AG04450 (cell line): ENCODE measurements at regions of chr14 and their contacts with region 1.

Region 1: GRCh38 chr14:94601884-94602391 is 10.3 kb upstream of the SERPINA3 start:
- DNase-seq: peak; percentile 78
- H3K4me3 ChIP-seq: no peak overlapping the region
- H3K27ac ChIP-seq: peak overlapping the region; percentile 94
- H3K27me3 ChIP-seq: no peaks in the 10 kb centered on the region
- CTCF ChIP-seq: no peak

Region 2: DNA sequence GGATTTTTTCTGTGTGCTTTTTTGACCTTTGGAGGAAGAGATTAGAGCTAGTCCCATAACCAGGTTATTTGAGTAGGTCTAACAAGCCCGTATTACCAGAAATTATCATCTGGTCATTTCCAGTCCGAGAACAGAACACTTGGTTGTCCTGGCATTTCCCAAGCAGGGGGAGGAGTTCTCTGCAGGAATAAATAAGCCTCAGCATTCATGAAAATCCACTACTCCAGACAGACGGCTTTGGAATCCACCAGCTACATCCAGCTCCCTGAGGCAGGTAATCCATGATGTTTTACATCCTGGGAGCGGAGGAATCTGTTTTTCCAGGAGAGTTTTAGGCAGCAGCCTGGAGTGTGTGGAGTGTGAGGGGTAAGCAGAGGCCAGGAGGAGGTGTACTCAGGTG is 10.2 kb after region 1 on chr14 and contains the start of gene SERPINA3:
- CTCF ChIA-PET with region 1: interaction called, 4 read pairs
- POLR2A ChIA-PET with region 1: interaction called, 16 read pairs
- DNase-seq: no peak
- H3K4me3 ChIP-seq: no peak within 1 kb of the TSS
- H3K27ac ChIP-seq: peak within 1 kb of the TSS; percentile 57
- H3K27me3 ChIP-seq: no peaks in the 10 kb centered on the region
- CTCF ChIP-seq: no peak
- polyA plus RNA-seq, gene SERPINA3: 1.8 and 2.4 TPM in 2 replicates

Region 3: DNA sequence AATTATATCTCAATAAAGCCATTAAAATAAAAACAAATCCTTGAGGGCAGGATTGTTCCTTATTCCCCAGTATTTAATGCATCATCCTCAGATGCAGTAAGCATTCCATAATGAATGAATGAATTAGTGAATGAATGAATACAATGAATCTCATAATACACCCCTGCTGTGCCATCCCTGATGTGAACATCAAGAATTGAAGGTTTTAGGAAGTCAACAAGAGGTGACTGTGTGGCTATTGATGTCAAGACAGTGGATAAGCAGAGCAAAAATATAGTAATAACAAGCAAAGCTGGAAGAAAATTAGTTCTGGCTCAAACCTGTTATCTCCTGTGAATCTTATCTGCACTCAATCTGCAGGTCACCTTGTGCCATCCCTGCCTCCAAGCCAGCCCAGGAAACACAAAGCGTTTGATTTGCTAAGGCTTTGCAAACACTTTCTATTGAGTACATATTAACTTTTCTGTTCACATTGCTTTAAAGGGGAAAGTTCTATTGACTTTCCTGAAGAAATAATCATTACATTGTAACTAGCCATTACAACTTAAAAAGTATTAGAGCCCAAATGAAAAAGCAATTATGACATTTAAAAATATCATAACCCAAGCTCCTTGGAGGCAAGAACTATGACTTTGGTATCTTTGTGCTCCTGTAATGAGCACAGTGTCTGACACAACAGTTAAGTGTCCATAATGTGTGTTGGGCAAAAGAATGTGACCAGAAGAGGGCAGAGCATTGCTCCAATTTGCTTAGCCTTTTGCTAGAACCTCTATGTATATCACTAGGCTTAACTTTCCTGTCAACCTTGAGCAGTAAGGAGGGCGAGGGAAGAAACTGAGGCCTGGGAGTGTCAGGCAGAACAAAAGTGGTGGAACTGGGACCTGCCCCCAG is 34.8 kb after region 1 on chr14:
- CTCF ChIA-PET with region 1: interaction called, 12 read pairs
- POLR2A ChIA-PET with region 1: no interaction called
- DNase-seq: no peak
- H3K4me3 ChIP-seq: no peak overlapping the region
- H3K27ac ChIP-seq: no peak overlapping the region
- H3K27me3 ChIP-seq: peaks cover 8% of the 10 kb centered on the region
- CTCF ChIP-seq: 0 out of 2 replicates have a peak, but pooled peaks have one; percentile 17